Activated CD4-positive, alpha-beta T cell treated with anti-CD3 and anti-CD28 coated beads for 36 hours (primary cell): ENCODE measurements at regions of chr5 and their contacts with region 1.

Region 1: DNA sequence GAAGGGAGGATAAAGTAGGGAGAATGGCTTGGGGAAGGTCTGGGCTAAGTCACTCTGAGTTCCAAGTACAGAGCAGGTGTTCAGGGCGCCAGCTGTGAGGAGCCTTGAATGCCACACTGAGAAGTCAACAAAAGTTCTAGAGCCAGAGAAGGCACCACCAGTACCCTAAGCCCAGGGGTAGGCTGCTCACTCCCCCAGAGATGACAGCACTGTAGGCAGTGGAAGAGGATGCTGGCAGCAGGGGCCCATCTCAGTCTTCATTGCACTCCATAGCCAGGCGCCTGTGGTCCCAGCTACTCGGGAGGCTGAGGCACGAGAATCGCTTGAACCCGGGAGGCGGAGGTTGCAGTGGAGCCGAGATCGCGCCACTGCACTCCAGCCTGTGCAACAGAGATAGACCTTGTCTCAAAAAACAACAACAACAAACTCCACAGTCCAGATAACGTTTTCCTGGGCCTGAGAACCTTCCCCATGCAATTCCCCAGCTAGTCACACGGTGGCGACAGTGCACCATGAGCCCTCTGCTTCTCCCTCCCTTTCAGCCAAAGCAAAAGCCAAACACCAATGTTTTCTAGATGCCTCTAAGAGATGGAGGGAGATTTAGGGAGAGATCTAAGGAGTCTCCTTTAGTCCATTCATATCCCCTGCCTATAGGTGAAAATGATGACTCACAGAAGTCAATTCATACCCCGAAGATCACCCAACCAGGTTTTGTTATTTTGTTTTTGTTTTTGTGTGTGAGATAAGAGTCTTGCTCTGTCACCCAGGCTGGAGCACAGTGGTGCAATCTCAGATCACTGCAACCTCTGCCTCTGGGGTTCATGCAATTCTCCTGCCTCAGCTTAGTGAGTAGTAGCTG is 19.8 kb upstream of the NSD1 start:
- DNase-seq: peak; percentile 88
- ATAC-seq: peak; percentile 49
- H3K4me3 Mint-ChIP-seq: no peak overlapping the region
- H3K27ac Mint-ChIP-seq: peak overlapping the region; percentile 11
- H3K4me1 Mint-ChIP-seq: peaks cover 15% of the 10 kb centered on the region
- H3K27me3 Mint-ChIP-seq: no peaks in the 10 kb centered on the region

Region 2: DNA sequence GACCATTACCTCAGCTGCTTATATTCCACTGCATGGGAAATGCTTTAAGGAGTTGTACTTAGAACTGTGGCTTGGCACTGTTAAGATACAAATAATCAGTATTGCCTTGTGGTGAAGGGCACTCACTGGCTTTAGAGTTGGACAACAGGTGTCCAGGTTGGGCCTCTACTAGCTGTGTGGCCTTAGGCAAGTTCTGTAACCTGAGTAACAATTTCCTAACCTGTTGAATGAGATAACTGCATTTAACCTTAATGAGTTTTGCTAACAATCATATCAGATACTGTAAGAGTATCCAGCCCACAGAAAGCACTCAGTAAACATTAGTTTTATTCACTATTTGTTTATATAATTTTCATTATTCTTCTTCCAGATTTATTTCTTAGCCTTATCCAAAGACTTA is 197.5 kb before region 1 on chr5:
- CTCF ChIA-PET with region 1: no interaction called
- POLR2A ChIA-PET with region 1: no interaction called
- intact Hi-C with region 1: no loop called
- DNase-seq: no peak
- ATAC-seq: no peak
- H3K4me3 Mint-ChIP-seq: no peak overlapping the region
- H3K27ac Mint-ChIP-seq: no peak overlapping the region
- H3K4me1 Mint-ChIP-seq: peaks cover 14% of the 10 kb centered on the region
- H3K27me3 Mint-ChIP-seq: no peaks in the 10 kb centered on the region

Region 3: GRCh38 chr5:176985516-176985915 is 128.3 kb before region 1 on chr5:
- CTCF ChIA-PET with region 1: no interaction called
- POLR2A ChIA-PET with region 1: no interaction called
- intact Hi-C with region 1: no loop called
- DNase-seq: peak; percentile 30
- ATAC-seq: peak; percentile 66
- H3K4me3 Mint-ChIP-seq: no peak overlapping the region
- H3K27ac Mint-ChIP-seq: no peak overlapping the region
- H3K4me1 Mint-ChIP-seq: peaks cover 24% of the 10 kb centered on the region
- H3K27me3 Mint-ChIP-seq: no peaks in the 10 kb centered on the region

Region 4: DNA sequence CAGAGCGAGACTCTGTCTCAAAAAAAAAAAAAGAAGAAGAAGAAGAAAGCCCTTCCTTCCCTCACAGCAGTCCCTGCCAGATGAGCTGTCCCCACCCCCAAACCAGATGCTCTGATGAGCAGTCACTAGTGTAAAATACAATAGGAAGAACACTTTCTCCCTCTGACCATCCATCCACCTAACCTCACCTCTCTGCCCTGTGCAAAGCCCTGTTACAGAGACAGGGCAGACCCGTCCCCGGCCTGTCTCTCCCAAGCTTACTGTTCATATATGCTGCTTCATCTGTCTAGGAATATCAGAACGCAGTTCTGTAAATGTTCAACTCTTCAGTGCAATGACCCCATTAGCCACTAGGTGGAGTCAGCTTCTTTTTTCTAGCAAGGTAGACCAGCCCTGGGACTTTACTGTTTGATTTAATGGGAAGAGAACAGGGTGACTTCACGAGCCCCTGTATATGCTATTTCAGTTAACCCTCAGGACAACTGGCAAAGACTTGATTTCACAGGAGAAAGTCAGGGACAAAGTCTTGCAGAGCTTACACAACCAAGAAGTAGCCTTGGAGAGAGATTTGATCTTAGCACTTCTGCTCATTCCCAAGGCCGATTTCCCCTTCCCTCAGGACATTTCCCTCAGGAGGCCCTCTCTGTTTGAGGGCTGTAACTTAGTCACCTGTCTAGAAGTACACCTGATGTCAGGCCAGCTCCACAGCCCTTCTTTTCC is 42.0 kb before region 1 on chr5:
- CTCF ChIA-PET with region 1: interaction called, 60 read pairs
- POLR2A ChIA-PET with region 1: no interaction called
- intact Hi-C with region 1: loop called (anchors 1 to 2 kb)
- DNase-seq: peak; percentile 80
- ATAC-seq: peak; percentile 87
- H3K4me3 Mint-ChIP-seq: no peak overlapping the region
- H3K27ac Mint-ChIP-seq: no peak overlapping the region
- H3K4me1 Mint-ChIP-seq: peaks cover 4% of the 10 kb centered on the region
- H3K27me3 Mint-ChIP-seq: no peaks in the 10 kb centered on the region

Region 5: DNA sequence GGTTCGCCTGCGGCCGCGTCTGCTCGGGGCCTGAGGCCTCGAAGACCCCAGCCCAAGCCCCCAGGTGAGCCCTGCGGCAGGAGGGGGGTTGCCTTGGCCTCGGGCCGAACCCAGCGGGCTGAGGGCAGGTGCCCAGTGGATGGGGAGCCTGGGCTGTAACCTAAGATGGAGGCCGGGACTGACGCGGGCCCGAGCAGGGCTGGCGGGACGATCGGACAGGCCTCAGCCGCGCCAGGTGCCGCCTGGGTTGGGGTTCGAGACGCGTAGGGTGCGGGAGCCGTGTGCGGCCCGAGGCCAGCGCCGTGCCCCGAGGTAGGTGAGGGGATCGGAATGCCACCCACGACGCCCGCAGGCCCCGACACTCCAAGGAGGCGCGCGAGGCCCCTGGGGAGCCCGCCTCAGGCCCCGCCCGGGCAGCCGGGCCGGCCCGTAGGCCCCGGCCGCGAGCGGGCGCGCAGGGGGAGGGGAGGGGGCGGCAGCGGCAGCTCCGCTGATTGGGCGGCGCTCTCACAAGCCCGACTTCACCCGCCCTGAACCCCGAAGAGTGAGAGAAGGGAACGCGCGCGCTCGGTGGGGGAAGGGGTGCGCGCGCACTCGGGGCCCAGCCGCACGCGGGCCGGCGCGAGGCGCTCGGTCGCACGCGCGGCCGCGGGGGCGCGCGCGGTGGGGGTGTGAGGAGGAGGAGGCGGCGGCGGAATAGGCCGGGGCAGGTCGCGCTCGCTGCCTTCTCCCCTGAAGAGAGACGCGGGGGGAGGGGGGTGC is 19.5 kb after region 1 on chr5 and contains the start of gene NSD1:
- CTCF ChIA-PET with region 1: interaction called, 24 read pairs
- POLR2A ChIA-PET with region 1: no interaction called
- intact Hi-C with region 1: loop called (anchors 1 kb)
- DNase-seq: peak; percentile 95
- ATAC-seq: peak; percentile 81
- H3K4me3 Mint-ChIP-seq: peak within 1 kb of the TSS; percentile 91
- H3K27ac Mint-ChIP-seq: peak within 1 kb of the TSS; percentile 89
- H3K4me1 Mint-ChIP-seq: peaks cover 48% of the 10 kb centered on the region
- H3K27me3 Mint-ChIP-seq: no peaks in the 10 kb centered on the region
- total RNA-seq, gene NSD1: 65.6 to 68.2 TPM

Region 6: DNA sequence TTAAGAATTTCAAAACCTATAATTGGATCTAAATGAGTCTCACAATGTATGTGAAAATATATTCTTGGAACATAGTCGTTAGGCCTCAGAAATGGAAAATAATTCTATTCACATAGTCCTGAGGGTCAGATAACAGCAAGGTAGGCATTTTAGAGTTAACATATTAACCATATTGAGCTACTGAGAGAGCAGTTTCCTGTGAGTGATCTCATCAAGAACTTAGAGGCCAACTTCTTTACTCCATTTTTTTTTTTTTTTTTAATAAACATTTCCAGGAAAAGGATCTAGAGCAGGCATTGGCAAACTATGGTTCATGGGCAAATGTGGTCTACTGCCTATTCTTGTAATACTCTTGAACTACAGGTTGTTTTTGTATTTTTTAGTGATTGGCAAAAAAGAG is 163.1 kb after region 1 on chr5:
- CTCF ChIA-PET with region 1: interaction called, 5 read pairs
- POLR2A ChIA-PET with region 1: no interaction called
- intact Hi-C with region 1: loop called in 1 of 2 experiments (anchors 10 kb)
- DNase-seq: no peak
- ATAC-seq: no peak
- H3K4me3 Mint-ChIP-seq: no peak overlapping the region
- H3K27ac Mint-ChIP-seq: peak overlapping the region; percentile 70
- H3K4me1 Mint-ChIP-seq: peaks cover 3% of the 10 kb centered on the region
- H3K27me3 Mint-ChIP-seq: no peaks in the 10 kb centered on the region

Region 7: GRCh38 chr5:177311723-177312648 is 198.2 kb after region 1 on chr5 and contains the start of gene MXD3:
- CTCF ChIA-PET with region 1: interaction called, 7 read pairs
- POLR2A ChIA-PET with region 1: interaction called, 3 read pairs
- intact Hi-C with region 1: loop called in 1 of 2 experiments (anchors 1 kb)
- DNase-seq: peak; percentile 99
- ATAC-seq: peak; percentile 88
- H3K4me3 Mint-ChIP-seq: peak within 1 kb of the TSS; percentile 85
- H3K27ac Mint-ChIP-seq: peak within 1 kb of the TSS; percentile 84
- H3K4me1 Mint-ChIP-seq: peaks cover 28% of the 10 kb centered on the region
- H3K27me3 Mint-ChIP-seq: no peaks in the 10 kb centered on the region
- total RNA-seq, gene MXD3: 21.3 to 27.2 TPM

Region 8: GRCh38 chr5:177497292-177498033 is 383.7 kb after region 1 on chr5 and contains the start of gene PDLIM7:
- CTCF ChIA-PET with region 1: interaction called, 3 read pairs
- POLR2A ChIA-PET with region 1: no interaction called
- intact Hi-C with region 1: loop called in 1 of 2 experiments (anchors 1 kb)
- DNase-seq: peak; percentile 98
- ATAC-seq: peak; percentile 86
- H3K4me3 Mint-ChIP-seq: peak within 1 kb of the TSS; percentile 73
- H3K27ac Mint-ChIP-seq: peak within 1 kb of the TSS; percentile 37
- H3K4me1 Mint-ChIP-seq: peaks cover 31% of the 10 kb centered on the region
- H3K27me3 Mint-ChIP-seq: peaks cover 12% of the 10 kb centered on the region
- total RNA-seq, gene PDLIM7: 41.9 to 50.2 TPM